Kidney (tissue), 22 donors: ENCODE measurements at regions of chr6 and their contacts with region 1.

Region 1: GRCh38 chr6:113858480-113859348 is 1.6 kb downstream of the MARCKS start:
- DNase-seq: peak; percentile 95 to 97 (median 96)
- H3K4me3 ChIP-seq: peak overlapping the region; percentile 90 to 92 (median 91)
- H3K27ac ChIP-seq: peak overlapping the region; percentile 93 to 95
- H3K4me1 ChIP-seq: peaks cover 0 to 4% (median 3%) of the 10 kb centered on the region in 3 donors
- H3K27me3 ChIP-seq: no peaks in the 10 kb centered on the region
- CTCF ChIP-seq: peak; percentile 97

Region 2: GRCh38 chr6:112780498-112781096 is 1078.1 kb before region 1 on chr6:
- intact Hi-C with region 1: loop called (anchors 10 kb)
- DNase-seq: peak; percentile 46 to 93 (median 83)
- H3K4me3 ChIP-seq: no peak overlapping the region
- H3K27ac ChIP-seq: no peak overlapping the region
- H3K4me1 ChIP-seq: no peaks in the 10 kb centered on the region
- H3K27me3 ChIP-seq: no peaks in the 10 kb centered on the region
- CTCF ChIP-seq: peak; percentile 77

Region 3: GRCh38 chr6:113786168-113786567 is 72.5 kb before region 1 on chr6:
- intact Hi-C with region 1: no loop called
- DNase-seq: no peak
- H3K4me3 ChIP-seq: no peak overlapping the region
- H3K27ac ChIP-seq: no peak overlapping the region
- H3K4me1 ChIP-seq: no peaks in the 10 kb centered on the region
- H3K27me3 ChIP-seq: no peaks in the 10 kb centered on the region
- CTCF ChIP-seq: no peak